Activated naive CD4-positive, alpha-beta T cell treated with anti-CD3 and anti-CD28 coated beads for 36 hours (primary cell): ENCODE measurements at regions of chr13 and their contacts with region 1.

Region 1: GRCh38 chr13:108961542-108962125 is 332.2 kb downstream of the MYO16 start:
- DNase-seq: no peak
- H3K4me3 Mint-ChIP-seq: no peak overlapping the region
- H3K27ac Mint-ChIP-seq: no peak overlapping the region
- H3K4me1 Mint-ChIP-seq: no peaks in the 10 kb centered on the region
- H3K27me3 Mint-ChIP-seq: peaks cover 4% of the 10 kb centered on the region

Region 2: DNA sequence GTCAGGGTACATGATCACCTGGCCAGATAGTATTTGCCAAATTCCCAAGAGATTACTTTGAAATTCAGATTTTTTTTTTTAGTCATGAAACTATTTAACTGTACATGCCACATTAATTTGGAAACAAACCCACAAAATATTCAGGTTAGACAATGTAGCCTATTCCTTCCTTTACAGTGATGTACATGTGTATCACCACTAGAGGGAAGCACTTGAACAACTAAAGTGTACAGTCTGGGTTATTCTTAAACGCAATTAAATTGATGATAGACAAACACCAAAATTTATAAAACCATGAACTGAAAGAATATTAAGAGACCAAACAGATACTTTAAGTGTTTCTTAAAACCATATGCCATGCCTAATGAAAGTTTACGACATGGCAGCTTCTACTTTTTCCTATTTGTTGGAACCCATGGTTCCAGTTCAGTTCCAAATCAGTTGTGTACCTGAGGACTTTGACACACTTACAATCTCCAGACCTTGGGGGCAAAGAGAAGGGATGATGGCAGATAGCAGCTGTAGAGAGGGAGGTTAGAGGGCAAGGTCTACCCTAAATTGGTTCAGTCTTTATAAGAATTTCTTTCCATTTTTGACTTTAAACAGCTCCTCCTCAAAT is 639.3 kb before region 1 on chr13:
- CTCF ChIA-PET with region 1: no interaction called
- intact Hi-C with region 1: no loop called
- DNase-seq: no peak
- H3K4me3 Mint-ChIP-seq: no peak overlapping the region
- H3K27ac Mint-ChIP-seq: no peak overlapping the region
- H3K4me1 Mint-ChIP-seq: peaks cover 21% of the 10 kb centered on the region
- H3K27me3 Mint-ChIP-seq: no peaks in the 10 kb centered on the region

Region 3: DNA sequence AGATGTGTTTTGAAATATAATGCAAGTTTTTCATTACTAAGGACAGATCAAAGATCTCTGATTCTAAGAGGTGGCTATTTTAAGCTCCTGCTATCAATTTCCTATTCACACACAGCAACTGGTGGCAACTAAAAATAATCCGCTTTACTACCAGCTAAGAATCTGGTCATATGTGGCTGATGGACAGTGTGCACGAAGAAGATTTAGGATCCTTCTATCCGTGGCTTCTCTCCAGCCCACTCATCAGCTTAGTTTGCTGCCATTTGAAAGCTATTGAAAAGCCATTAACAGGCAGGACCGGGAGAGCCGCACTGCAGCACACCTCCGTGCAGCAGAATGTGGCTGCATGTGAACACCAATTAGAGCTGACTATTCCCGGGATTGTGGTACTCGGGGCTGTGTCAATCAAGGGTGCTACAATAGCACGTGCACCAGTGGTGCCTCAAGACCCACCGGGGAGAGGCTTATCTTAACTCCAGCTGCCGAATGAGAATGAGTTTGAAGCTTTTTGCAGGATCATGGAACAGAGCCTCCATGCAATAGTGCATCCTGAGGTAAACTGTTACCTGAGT is 332.4 kb before region 1 on chr13 and contains the start of gene MYO16:
- CTCF ChIA-PET with region 1: no interaction called
- intact Hi-C with region 1: no loop called
- DNase-seq: no peak
- H3K4me3 Mint-ChIP-seq: no peak within 1 kb of the TSS
- H3K27ac Mint-ChIP-seq: no peak within 1 kb of the TSS
- H3K4me1 Mint-ChIP-seq: no peaks in the 10 kb centered on the region
- H3K27me3 Mint-ChIP-seq: peaks cover 7% of the 10 kb centered on the region
- total RNA-seq, gene MYO16: not detected

Region 4: DNA sequence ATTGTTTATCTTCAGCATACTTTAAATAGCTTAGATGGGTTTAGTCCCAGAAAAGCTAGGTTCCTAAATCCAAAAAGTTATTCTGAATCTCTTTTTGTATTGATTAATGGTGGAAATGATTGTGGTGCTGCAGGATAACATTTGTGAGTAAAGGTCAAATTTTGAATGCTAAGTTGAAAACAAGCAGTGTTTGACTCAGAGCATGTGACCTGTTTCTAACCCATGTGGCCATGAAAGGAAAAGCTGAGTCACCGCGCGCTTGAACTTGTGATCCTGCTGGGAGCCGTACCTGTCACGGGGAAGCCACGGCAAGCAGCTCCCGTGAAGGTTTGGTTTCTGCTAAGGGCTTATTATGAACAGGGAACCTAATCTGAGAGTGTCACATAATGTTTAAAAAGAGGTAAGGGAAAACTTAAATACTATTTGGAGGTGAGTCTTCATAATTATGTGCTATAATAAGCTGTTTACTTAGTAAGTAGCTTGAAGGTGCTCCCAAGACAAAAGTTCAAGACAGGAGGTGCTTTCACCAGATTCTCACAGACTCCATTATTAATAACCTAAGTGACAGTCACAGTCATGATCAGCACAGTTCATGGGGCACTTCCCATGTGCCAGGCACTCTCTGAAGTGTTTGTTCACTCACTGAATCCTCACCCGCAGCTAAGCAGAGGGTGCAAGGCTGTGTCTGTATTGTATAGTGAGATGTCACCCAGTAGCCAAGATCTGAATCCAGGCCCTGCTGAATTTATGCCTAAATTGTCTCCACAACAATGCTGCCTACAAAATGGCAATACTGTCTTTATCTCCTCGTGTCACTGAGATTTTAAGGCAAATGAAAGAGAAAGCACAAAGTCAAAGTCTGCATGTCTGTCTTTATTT is 45.8 kb before region 1 on chr13:
- CTCF ChIA-PET with region 1: interaction called, 16 read pairs
- intact Hi-C with region 1: loop called (anchors 2 kb)
- DNase-seq: peak; percentile 98
- H3K4me3 Mint-ChIP-seq: peak overlapping the region; percentile 68
- H3K27ac Mint-ChIP-seq: peak overlapping the region; percentile 87
- H3K4me1 Mint-ChIP-seq: peaks cover 20% of the 10 kb centered on the region
- H3K27me3 Mint-ChIP-seq: peaks cover 8% of the 10 kb centered on the region

Region 5: GRCh38 chr13:108940121-108940520 is 21.5 kb before region 1 on chr13:
- CTCF ChIA-PET with region 1: no interaction called
- intact Hi-C with region 1: no loop called
- DNase-seq: no peak
- H3K4me3 Mint-ChIP-seq: no peak overlapping the region
- H3K27ac Mint-ChIP-seq: no peak overlapping the region
- H3K4me1 Mint-ChIP-seq: no peaks in the 10 kb centered on the region
- H3K27me3 Mint-ChIP-seq: peaks cover 15% of the 10 kb centered on the region

Region 6: GRCh38 chr13:109145631-109146030 is 184.0 kb after region 1 on chr13:
- CTCF ChIA-PET with region 1: no interaction called
- intact Hi-C with region 1: loop called (anchors 5 kb)
- DNase-seq: peak; percentile 41
- H3K4me3 Mint-ChIP-seq: no peak overlapping the region
- H3K27ac Mint-ChIP-seq: no peak overlapping the region
- H3K4me1 Mint-ChIP-seq: no peaks in the 10 kb centered on the region
- H3K27me3 Mint-ChIP-seq: peaks cover 35% of the 10 kb centered on the region

Region 7: DNA sequence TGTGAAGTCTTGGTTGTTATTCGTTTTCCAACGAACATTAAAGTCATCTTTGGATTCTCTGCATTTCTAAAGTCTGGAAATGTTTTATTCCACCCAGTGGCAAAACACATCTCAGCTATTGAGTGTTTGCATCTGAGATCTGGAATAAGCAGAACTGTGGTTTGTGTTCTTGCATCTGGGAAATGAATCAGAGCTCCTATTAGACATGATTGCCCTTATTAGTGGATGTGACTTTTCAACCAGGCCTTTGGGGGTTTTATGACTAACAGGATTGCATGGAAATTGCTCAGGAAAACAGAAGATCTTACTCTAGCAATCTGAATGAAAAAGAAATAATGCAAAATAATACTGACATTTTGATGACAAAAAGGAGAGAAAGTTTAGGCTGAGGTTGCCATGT is 336.0 kb after region 1 on chr13:
- CTCF ChIA-PET with region 1: no interaction called
- intact Hi-C with region 1: no loop called
- DNase-seq: no peak
- H3K4me3 Mint-ChIP-seq: no peak overlapping the region
- H3K27ac Mint-ChIP-seq: no peak overlapping the region
- H3K4me1 Mint-ChIP-seq: no peaks in the 10 kb centered on the region
- H3K27me3 Mint-ChIP-seq: peaks cover 15% of the 10 kb centered on the region

Region 8: DNA sequence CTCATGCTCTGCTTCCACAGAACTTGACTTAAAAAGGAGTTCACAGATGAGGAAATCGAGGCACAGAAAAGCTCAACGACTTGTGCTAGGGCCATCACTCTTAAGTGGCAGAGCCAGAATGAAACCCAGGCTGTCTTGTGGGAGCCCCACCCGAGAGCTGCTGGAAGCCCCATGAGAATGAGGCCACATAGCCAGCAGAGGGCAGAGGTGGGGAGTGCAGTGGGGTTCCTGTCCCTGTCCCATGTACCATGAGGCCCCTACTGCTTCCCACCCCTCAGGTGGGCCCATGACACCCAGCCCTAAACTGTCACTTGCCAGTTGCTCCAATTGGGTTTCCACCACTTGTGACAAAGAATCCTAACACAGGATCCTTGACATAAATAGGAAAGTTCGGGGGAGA is 648.9 kb after region 1 on chr13:
- CTCF ChIA-PET with region 1: no interaction called
- intact Hi-C with region 1: loop called (anchors 10 kb)
- DNase-seq: peak; percentile 51
- H3K4me3 Mint-ChIP-seq: no peak overlapping the region
- H3K27ac Mint-ChIP-seq: no peak overlapping the region
- H3K4me1 Mint-ChIP-seq: peaks cover 2% of the 10 kb centered on the region
- H3K27me3 Mint-ChIP-seq: no peaks in the 10 kb centered on the region

Region 9: GRCh38 chr13:109938255-109938936 is 976.8 kb after region 1 on chr13:
- CTCF ChIA-PET with region 1: no interaction called
- intact Hi-C with region 1: loop called (anchors 10 kb)
- DNase-seq: no peak
- H3K4me3 Mint-ChIP-seq: no peak overlapping the region
- H3K27ac Mint-ChIP-seq: no peak overlapping the region
- H3K4me1 Mint-ChIP-seq: no peaks in the 10 kb centered on the region
- H3K27me3 Mint-ChIP-seq: peaks cover 4% of the 10 kb centered on the region

Region 10: DNA sequence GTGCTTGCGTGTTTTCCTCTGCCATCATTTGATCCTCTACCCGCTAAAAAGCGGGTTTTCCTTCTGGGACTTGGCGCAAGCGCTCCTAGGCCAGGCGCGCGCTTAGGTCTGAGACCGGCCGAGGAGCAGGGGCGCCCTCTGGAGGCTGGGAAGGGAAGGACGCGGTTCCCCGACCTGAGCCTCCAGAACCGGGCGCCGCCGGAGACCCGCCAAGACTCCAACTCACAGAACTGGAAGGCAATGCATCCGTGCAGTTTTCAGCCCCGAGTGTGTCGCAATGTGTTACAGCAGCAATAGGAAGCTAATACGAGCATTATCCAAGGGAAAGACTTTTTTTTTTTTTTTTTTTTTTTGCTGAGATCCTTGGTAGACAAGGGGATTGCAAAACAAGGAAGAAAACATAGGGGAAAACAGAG is 1154.4 kb after region 1 on chr13:
- CTCF ChIA-PET with region 1: interaction called, 3 read pairs
- intact Hi-C with region 1: loop called (anchors 1 kb)
- DNase-seq: peak; percentile 67
- H3K4me3 Mint-ChIP-seq: no peak overlapping the region
- H3K27ac Mint-ChIP-seq: no peak overlapping the region
- H3K4me1 Mint-ChIP-seq: peaks cover 2% of the 10 kb centered on the region
- H3K27me3 Mint-ChIP-seq: peaks cover 32% of the 10 kb centered on the region

Region 11: GRCh38 chr13:110225609-110226562 is 1264.3 kb after region 1 on chr13:
- CTCF ChIA-PET with region 1: no interaction called
- intact Hi-C with region 1: loop called (anchors 10 kb)
- DNase-seq: no peak
- H3K4me3 Mint-ChIP-seq: no peak overlapping the region
- H3K27ac Mint-ChIP-seq: no peak overlapping the region
- H3K4me1 Mint-ChIP-seq: no peaks in the 10 kb centered on the region
- H3K27me3 Mint-ChIP-seq: peaks cover 16% of the 10 kb centered on the region